Activated T-helper 2 cell treated with anti-CD3 and anti-CD28 coated beads, Interferon-gamma antibody, Interleukin-2, Interleukin-4, amounts not matched to agents 10 μg/mL and 5 μg/mL and 100 μg/mL, durations not matched to agents 14 hours and 24 hours and 36 hours (primary cell): ENCODE measurements at regions of chr6 and their contacts with region 1.

Region 1: DNA sequence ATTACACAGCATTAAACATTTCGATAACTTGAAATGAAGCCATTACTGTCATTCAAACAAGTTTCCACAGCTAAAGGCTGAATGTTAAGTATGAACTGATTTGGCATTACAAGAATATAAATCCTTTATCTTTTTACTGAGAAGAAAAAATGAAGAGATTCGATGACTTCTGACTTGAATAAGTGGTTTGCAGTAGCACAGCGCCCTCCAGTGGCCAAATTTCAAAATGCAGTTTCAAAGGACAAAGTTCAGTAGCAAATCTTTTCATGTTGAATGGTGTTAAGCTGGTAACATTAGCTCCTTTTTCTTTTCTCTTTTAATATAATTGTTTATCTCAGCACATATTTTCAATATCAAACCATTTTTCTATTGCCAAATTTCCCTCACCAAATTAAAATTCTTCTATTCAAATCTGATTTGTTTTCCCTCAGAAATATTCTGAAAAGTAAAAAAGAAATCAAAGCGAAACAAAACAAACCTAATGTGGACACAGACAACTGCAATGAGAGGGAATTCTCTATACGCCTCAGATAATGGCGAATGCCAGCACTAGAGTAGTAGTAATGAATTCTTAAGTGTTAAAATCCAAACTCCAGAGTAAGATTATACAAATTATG is 145.7 kb downstream of the BTBD9 start:
- DNase-seq: peak; percentile 60
- H3K4me3 Mint-ChIP-seq: no peak overlapping the region
- H3K27ac Mint-ChIP-seq: no peak overlapping the region
- H3K4me1 Mint-ChIP-seq: peaks cover 5% of the 10 kb centered on the region
- H3K27me3 Mint-ChIP-seq: no peaks in the 10 kb centered on the region

Region 2: GRCh38 chr6:37698261-37699137 is 795.5 kb before region 1 on chr6:
- intact Hi-C with region 1: loop called (anchors 5 kb)
- DNase-seq: peak; percentile 55
- H3K4me3 Mint-ChIP-seq: peak overlapping the region; percentile 99
- H3K27ac Mint-ChIP-seq: peak overlapping the region; percentile 95
- H3K4me1 Mint-ChIP-seq: peaks cover 23% of the 10 kb centered on the region
- H3K27me3 Mint-ChIP-seq: peaks cover 57% of the 10 kb centered on the region

Region 3: DNA sequence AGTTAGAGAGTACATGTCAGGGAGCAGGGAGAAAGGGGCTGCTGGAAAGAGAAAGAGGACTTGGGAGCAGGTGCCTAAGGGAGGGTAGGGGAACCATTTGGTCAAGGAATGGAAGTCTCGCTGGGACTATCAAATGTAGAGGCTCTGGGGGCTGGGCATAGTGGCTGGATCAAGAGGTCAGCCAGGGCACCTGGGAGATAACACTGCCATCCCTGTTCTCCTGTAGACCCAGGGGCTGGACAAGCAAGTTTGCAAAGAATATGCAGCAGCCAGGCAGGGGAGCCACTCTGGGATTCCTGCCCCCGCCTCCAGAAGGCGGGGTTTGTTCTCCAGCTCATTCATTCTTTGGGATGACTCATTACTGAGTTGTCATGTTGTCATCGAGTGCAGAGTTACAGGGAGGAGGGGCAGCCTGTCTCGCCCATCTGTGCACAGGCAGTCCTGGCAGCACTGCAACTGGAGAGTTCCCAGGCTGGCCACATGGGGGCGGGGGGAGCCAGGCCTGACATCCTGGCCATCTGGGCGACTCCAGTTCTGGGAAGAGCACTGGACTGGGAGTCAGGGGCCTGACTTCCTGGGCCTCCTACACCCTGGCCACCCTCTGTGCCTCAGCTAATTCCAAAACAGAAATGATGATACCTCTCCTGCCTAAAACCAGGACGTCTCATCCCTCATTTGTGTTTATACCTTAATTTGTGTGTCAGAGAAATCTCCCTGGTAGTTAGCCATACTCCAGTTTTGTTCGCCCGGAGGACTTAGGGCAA is 702.7 kb before region 1 on chr6:
- intact Hi-C with region 1: loop called (anchors 5 kb)
- DNase-seq: peak; percentile 68
- H3K4me3 Mint-ChIP-seq: no peak overlapping the region
- H3K27ac Mint-ChIP-seq: no peak overlapping the region
- H3K4me1 Mint-ChIP-seq: peaks cover 11% of the 10 kb centered on the region
- H3K27me3 Mint-ChIP-seq: peaks cover 8% of the 10 kb centered on the region

Region 4: GRCh38 chr6:38034274-38034914 is 459.6 kb before region 1 on chr6:
- intact Hi-C with region 1: loop called (anchors 5 kb)
- DNase-seq: no peak
- H3K4me3 Mint-ChIP-seq: no peak overlapping the region
- H3K27ac Mint-ChIP-seq: no peak overlapping the region
- H3K4me1 Mint-ChIP-seq: peaks cover 21% of the 10 kb centered on the region
- H3K27me3 Mint-ChIP-seq: no peaks in the 10 kb centered on the region

Region 5: DNA sequence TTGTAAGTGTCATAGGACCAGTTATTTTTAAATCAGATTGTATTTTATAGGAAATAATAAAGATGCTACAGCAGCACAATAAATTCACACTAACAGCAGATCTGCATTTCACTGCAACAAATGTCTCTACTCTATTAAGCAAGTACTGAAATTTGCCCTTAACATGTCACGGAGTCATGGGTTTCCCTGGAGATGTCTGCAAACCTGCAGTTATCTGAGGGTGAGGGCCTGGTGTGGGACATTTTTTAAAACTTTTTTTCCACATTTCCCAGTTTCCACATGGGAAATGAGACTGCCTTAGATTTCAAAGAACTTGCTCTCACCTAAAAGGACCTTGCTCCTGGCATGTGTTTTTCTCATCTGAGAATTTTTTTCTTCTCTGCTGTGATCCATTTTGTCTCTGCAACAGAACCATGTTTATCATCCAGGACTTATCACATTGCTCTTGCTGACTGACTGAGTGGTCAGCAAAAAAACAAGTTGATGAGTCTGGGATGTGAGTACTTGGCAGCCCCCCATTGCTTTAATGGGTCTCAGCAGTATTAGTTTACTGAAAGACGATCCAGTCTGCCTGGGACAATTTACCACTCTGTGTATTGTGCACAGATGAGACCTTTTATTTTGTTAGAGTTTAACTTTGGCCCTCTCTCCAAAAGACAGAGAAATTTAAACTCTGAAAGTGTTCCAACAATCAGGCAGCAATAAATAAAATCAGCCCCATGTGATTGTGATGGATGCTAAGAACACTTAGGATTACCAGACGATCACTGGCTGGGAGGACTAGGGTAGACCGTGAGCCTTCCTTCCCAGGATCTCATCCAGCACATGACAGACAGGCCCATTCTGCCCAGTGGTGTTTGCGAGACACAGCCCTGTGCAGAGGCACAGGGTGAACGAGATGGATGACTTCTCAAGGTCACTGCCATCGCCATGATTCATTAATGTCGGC is 123.1 kb before region 1 on chr6:
- intact Hi-C with region 1: no loop called
- DNase-seq: no peak
- H3K4me3 Mint-ChIP-seq: no peak overlapping the region
- H3K27ac Mint-ChIP-seq: no peak overlapping the region
- H3K4me1 Mint-ChIP-seq: no peaks in the 10 kb centered on the region
- H3K27me3 Mint-ChIP-seq: no peaks in the 10 kb centered on the region

Region 6: GRCh38 chr6:38570750-38571149 is 76.7 kb after region 1 on chr6:
- intact Hi-C with region 1: loop called (anchors 5 kb)
- DNase-seq: no peak
- H3K4me3 Mint-ChIP-seq: no peak overlapping the region
- H3K27ac Mint-ChIP-seq: no peak overlapping the region
- H3K4me1 Mint-ChIP-seq: peaks cover 24% of the 10 kb centered on the region
- H3K27me3 Mint-ChIP-seq: no peaks in the 10 kb centered on the region

Region 7: GRCh38 chr6:38671885-38672467 is 177.9 kb after region 1 on chr6:
- intact Hi-C with region 1: loop called (anchors 5 kb)
- DNase-seq: peak; percentile 15
- H3K4me3 Mint-ChIP-seq: no peak overlapping the region
- H3K27ac Mint-ChIP-seq: no peak overlapping the region
- H3K4me1 Mint-ChIP-seq: peaks cover 33% of the 10 kb centered on the region
- H3K27me3 Mint-ChIP-seq: no peaks in the 10 kb centered on the region